Posterior vena cava (tissue), 2 donors: ENCODE measurements at regions of chr17 and their contacts with region 1.

Region 1: DNA sequence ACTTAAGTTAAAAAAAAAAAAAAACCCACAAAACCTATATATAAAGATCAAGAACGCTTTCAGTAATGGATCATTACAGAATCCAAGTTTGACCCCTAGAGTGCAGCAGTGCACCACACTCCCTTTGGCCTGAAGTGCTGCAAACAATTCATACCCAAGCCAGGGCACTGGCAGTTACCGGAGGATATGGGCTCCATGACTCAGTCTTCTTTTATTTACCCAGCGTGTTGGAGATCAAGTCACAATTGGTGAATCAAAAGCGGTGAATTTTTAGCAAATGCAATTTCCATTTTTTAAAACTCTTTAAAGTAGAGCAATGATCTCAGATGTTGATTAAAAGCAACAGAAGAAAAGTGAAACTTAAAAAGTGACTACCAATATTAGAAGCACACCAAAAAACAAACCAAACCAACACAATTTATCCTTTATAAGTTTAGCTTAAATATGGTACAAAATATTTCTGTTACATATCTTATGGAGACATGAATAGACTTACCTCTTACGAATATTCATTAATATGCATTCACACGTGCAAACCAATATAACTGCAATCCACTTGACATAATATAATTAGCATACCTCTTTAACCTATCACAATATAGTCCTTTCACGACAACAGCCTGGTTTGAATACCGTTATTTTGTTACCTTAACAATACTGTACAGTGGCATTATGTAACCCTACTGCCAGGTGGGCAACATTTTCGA is 46.3 kb downstream of the ZNF652 start:
- DNase-seq: peak; percentile 86

Region 2: DNA sequence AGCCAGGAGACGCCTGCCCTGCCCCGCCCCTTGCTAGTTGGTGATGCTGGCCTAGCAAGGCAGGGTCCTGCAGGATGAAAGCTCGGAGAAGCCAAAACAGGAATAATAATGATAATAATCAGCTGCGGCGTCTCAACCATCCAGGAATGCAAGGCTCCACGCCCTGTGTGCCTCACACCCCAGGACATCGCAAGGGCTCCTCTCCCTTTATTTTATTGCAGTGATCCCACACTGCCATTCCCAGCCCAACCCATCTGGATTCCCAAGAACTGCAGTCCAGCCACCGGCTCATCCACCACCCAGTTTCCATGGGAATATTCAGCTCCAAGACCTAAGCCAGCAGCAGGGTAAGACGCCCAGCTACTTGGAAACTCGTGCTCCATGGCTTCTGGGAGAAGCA is 67.4 kb after region 1 on chr17:
- intact Hi-C with region 1: loop called in 1 of 2 experiments (anchors 1 kb)
- DNase-seq: peak; percentile 41

Region 3: GRCh38 chr17:49390548-49391324 is 75.0 kb after region 1 on chr17:
- intact Hi-C with region 1: loop called (anchors 2 kb)
- DNase-seq: no peak

Region 4: GRCh38 chr17:49556223-49556971 is 240.7 kb after region 1 on chr17:
- intact Hi-C with region 1: loop called (anchors 10 kb)
- DNase-seq: peak; percentile 93